OCI-LY7 (cell line): ENCODE measurements at regions of chr3 and their contacts with region 1.

Region 1: GRCh38 chr3:51845129-51845528 is 16.3 kb upstream of the IQCF2 start:
- DNase-seq: no peak
- H3K4me3 ChIP-seq: no peak overlapping the region
- H3K27ac ChIP-seq: no peak overlapping the region
- H3K4me1 ChIP-seq: no peaks in the 10 kb centered on the region
- CTCF ChIP-seq: no peak

Region 2: GRCh38 chr3:51928438-51928837 is 83.3 kb after region 1 on chr3:
- CTCF ChIA-PET with region 1: no interaction called
- POLR2A ChIA-PET with region 1: interaction called, 11 read pairs
- intact Hi-C with region 1: no loop called
- DNase-seq: no peak
- H3K4me3 ChIP-seq: no peak overlapping the region
- H3K27ac ChIP-seq: no peak overlapping the region
- H3K4me1 ChIP-seq: no peaks in the 10 kb centered on the region
- CTCF ChIP-seq: no peak

Region 3: GRCh38 chr3:51953445-51953844 is 108.3 kb after region 1 on chr3:
- CTCF ChIA-PET with region 1: no interaction called
- POLR2A ChIA-PET with region 1: no interaction called
- intact Hi-C with region 1: no loop called
- DNase-seq: no peak
- H3K4me3 ChIP-seq: no peak overlapping the region
- H3K27ac ChIP-seq: no peak overlapping the region
- H3K4me1 ChIP-seq: peaks cover 3% of the 10 kb centered on the region
- CTCF ChIP-seq: no peak